CD4-positive, alpha-beta T cell (primary cell): ENCODE measurements at regions of chr11 and their contacts with region 1.

Region 1: DNA sequence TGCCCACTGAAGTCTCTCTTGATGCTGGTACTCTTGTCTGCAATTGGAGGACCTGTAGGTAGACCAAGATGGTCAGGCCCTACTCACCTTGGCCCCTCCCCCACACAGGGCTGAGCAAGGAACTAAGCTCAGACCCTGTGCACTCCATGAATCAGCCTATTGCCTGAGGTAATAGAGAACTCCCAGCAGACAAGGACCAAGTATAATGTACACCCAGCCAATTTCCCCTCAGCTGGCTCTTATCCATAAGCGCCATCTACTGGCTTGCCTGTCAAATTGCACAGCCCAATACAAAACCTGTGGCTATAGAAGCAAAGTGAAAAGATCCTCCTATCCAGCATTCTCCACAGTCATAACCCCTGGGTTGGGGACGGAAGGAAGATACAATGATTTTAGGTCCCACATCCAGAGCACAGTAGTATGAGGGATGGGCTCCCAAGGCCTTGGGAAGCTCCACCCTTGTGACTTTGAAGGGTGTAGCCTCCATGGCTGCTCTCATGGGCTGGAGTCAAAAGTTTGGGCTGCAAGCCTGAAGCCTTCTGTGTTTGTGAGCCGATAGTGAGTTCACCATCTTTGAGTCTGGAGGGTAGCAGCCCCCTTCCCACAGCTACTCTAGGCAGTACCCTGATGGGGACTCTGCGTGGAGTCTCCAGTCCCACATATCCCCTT is 56.0 kb downstream of the GLYATL2 start:
- DNase-seq: peak; percentile 4 to 71 (median 24)
- ATAC-seq: peak; percentile 95
- H3K4me3 ChIP-seq: no peak overlapping the region
- H3K4me3 Mint-ChIP-seq: no peak overlapping the region
- H3K27ac ChIP-seq: no peak overlapping the region
- H3K27ac Mint-ChIP-seq: no peak overlapping the region
- H3K4me1 ChIP-seq: no peaks in the 10 kb centered on the region
- H3K4me1 Mint-ChIP-seq: no peaks in the 10 kb centered on the region
- H3K27me3 ChIP-seq: no peaks in the 10 kb centered on the region
- H3K27me3 Mint-ChIP-seq: peaks cover 7% of the 10 kb centered on the region
- CTCF ChIP-seq: peak; percentile 90

Region 2: DNA sequence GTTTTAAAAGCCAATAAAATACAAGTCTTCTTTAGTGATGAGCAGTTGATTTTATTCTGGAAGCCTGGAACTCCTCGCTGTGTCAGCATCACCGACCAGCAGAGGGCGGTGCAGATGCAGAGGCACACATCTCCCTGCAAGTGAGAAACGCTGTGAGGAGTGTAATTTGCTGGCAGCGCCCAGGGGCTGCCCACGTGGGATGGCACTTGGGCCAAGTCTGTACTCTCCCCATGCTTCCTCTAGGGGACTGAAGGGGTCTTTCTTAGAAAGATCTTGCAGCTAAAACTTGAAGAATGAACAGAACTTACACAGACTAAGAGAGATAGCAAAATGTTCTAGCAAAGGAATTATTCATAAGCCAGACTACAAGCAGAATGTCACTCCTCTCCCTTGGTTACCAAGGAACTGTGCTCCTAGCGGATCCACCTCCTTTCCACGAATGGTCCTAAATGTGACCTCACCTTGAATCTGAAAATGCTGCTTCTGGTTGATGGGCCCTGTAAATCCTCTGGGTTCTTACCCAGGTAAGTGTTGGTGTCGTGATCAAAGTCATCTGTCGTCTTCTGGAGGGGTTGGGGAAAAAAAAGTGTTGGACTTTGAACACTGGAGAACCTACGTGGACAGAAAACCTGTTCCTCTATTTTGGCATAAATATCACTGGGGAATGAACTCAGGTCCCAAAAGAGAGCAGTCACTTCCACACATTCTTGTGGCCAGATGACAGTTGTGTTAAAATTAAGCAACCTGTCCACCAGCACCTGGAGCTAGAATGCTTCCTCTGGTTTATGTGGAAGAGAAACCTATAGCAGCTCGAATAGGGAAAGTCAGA is 134.2 kb before region 1 on chr11:
- CTCF ChIA-PET with region 1: no interaction called
- POLR2A ChIA-PET with region 1: interaction called, 7 read pairs
- intact Hi-C with region 1: loop called (anchors 1 kb)
- DNase-seq: peak; percentile 64 to 86 (median 70)
- ATAC-seq: peak; percentile 99
- H3K4me3 ChIP-seq: no peak overlapping the region
- H3K4me3 Mint-ChIP-seq: no peak overlapping the region
- H3K27ac ChIP-seq: no peak overlapping the region
- H3K27ac Mint-ChIP-seq: no peak overlapping the region
- H3K4me1 ChIP-seq: peaks cover 3% of the 10 kb centered on the region
- H3K4me1 Mint-ChIP-seq: peaks cover 7% of the 10 kb centered on the region
- H3K27me3 ChIP-seq: no peaks in the 10 kb centered on the region
- H3K27me3 Mint-ChIP-seq: no peaks in the 10 kb centered on the region
- CTCF ChIP-seq: peak; percentile 96

Region 3: DNA sequence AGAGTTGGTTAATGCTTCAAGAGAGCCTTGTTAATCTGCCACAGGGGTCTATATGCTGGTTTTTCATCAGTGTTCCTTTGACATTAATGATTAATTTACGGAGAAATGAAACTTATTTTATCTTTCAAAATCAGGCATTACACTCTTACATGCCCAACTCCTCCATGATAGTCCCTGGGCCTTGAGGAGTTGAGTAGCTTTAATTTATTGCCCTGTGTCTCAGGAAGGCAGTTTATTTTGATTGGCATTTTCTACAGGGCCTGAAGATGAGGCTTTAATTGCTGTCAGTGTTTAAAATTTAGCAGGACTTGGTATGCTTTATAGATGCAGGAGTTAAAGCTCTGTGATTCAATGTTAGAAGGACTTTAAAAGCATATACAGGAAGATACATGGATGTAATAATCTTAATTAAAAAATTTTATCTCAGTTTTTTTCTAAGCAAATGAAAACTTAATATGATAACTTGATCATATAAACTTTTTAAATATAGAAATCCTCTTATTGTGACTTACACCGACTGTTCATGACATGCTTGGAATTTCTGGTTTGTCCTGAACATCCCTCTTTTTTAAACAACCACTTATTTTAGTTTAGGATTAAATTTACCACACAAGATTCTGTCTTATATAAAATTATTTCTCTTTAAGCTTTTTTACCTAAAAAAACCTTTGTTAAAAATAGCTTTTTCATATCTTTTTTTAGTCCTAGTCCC is 68.9 kb before region 1 on chr11:
- CTCF ChIA-PET with region 1: no interaction called
- POLR2A ChIA-PET with region 1: no interaction called
- intact Hi-C with region 1: loop called in 1 of 2 experiments (anchors 2 kb)
- DNase-seq: no peak
- ATAC-seq: no peak
- H3K4me3 ChIP-seq: no peak overlapping the region
- H3K4me3 Mint-ChIP-seq: no peak overlapping the region
- H3K27ac ChIP-seq: no peak overlapping the region
- H3K27ac Mint-ChIP-seq: no peak overlapping the region
- H3K4me1 ChIP-seq: no peaks in the 10 kb centered on the region
- H3K4me1 Mint-ChIP-seq: no peaks in the 10 kb centered on the region
- H3K27me3 ChIP-seq: no peaks in the 10 kb centered on the region
- H3K27me3 Mint-ChIP-seq: no peaks in the 10 kb centered on the region
- CTCF ChIP-seq: no peak

Region 4: DNA sequence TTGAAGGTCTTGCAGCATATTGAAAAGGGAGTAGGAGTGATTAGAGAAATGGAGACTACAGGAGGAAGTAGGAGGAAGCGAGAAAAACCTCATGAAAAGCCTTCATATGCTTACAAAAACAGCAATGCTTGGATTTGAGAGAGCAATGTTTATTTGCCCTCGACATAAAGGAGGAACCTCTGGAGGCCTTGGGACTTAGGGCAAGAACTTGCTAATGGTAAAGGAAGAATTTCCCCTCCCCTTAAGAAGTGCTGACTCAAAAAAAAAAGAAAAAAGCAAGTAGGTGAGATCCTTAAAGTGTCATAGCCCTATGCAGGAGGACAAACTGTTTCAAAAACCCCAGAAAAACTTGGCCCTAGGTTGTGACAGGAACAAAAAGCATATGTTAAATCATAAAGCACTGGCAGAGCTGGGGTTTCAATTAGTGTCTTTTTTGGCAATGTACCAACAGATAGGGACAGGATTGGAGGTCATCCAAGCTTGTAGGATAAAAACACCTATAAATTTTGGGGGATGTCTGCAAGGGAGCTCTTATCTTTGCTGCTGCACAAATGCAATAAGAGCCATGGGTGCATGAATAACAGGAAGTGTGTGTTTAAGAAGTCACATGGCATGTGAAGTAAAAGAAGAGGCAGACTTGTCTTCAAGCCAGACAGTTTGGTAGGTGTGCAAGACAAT is 61.6 kb before region 1 on chr11:
- CTCF ChIA-PET with region 1: no interaction called
- POLR2A ChIA-PET with region 1: interaction called, 9 read pairs
- intact Hi-C with region 1: loop called in 1 of 2 experiments (anchors 2 kb)
- DNase-seq: peak in 5 of 14 experiments; percentile 13 to 52 (median 35)
- ATAC-seq: peak; percentile 90
- H3K4me3 ChIP-seq: no peak overlapping the region
- H3K4me3 Mint-ChIP-seq: peak overlapping the region; percentile 30
- H3K27ac ChIP-seq: peak overlapping the region; percentile 48 to 62
- H3K27ac Mint-ChIP-seq: peak overlapping the region; percentile 93
- H3K4me1 ChIP-seq: peaks cover 28% of the 10 kb centered on the region
- H3K4me1 Mint-ChIP-seq: peaks cover 46% of the 10 kb centered on the region
- H3K27me3 ChIP-seq: no peaks in the 10 kb centered on the region
- H3K27me3 Mint-ChIP-seq: no peaks in the 10 kb centered on the region
- CTCF ChIP-seq: no peak